GM12878 (cell line): ENCODE measurements at regions of chr19 and their contacts with region 1.

Region 1: GRCh38 chr19:12777217-12778016 is 2.1 kb upstream of the HOOK2 start:
- DNase-seq: no peak
- ATAC-seq: peak; percentile 68
- H3K4me3 ChIP-seq: peak overlapping the region; percentile 76
- H3K27ac ChIP-seq: peak overlapping the region; percentile 91
- H3K4me1 ChIP-seq: peaks cover 30% of the 10 kb centered on the region
- H3K27me3 ChIP-seq: no peaks in the 10 kb centered on the region
- CTCF ChIP-seq: peak; percentile 90 to 98 (median 95)
- EP300 ChIP-seq: no peak
- POLR2A ChIP-seq: no peak
- RAD21 ChIP-seq: peak; percentile 89

Region 2: DNA sequence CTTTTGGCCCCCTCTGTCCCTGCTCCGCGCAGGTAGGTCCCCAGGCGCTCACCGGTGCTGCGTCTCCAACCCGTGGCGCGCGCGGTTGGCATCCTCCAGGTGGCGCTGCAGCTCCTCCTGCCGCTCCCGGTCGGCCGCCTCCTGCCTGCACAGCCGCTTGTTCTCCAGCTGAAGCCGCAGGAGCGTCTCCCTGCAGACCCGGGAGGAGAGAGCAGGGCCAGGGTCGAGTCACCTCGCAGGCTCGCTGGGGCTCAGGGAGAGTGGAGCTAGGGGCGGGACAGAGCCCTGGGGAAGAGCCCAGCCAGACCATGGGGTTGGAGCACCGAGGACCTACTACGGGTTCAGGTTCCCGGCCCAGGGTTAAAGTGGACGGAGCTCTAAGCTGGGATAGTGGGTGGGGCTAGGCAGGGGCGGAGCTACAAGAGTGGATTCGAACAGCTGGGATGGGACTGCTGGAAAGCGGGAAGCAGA is 11.3 kb before region 1 on chr19:
- CTCF ChIA-PET with region 1: interaction called, 45 read pairs
- POLR2A ChIA-PET with region 1: interaction called, 4 read pairs
- RAD21 ChIA-PET with region 1: interaction called, 13 read pairs
- SMC1A ChIA-PET with region 1: interaction called, 17 read pairs
- in situ Hi-C with region 1: no loop called
- intact Hi-C with region 1: no loop called
- DNase-seq: no peak
- ATAC-seq: peak; percentile 94
- H3K4me3 ChIP-seq: peak overlapping the region; percentile 49; the same call in 1 of the 2 replicates
- H3K27ac ChIP-seq: no peak overlapping the region
- H3K4me1 ChIP-seq: no peaks in the 10 kb centered on the region; the same call in 1 of the 2 replicates
- H3K27me3 ChIP-seq: no peaks in the 10 kb centered on the region; a peak in 1 of 4 replicates
- CTCF ChIP-seq: peak; percentile 80 to 96 (median 86)
- EP300 ChIP-seq: no peak
- POLR2A ChIP-seq: no peak
- RAD21 ChIP-seq: peak; percentile 65

Region 3: GRCh38 chr19:12806239-12807081 is 29.0 kb after region 1 on chr19 and contains the start of gene RNASEH2A:
- CTCF ChIA-PET with region 1: interaction called, 18 read pairs
- POLR2A ChIA-PET with region 1: interaction called, 3 read pairs
- RAD21 ChIA-PET with region 1: interaction called, 303 read pairs
- SMC1A ChIA-PET with region 1: interaction called, 240 read pairs
- in situ Hi-C with region 1: no loop called
- intact Hi-C with region 1: no loop called
- DNase-seq: no peak
- ATAC-seq: peak; percentile 94
- H3K4me3 ChIP-seq: peak within 1 kb of the TSS; percentile 78
- H3K27ac ChIP-seq: peak within 1 kb of the TSS; percentile 74
- H3K4me1 ChIP-seq: peaks cover 13% of the 10 kb centered on the region
- H3K27me3 ChIP-seq: no peaks in the 10 kb centered on the region
- CTCF ChIP-seq: no peak
- EP300 ChIP-seq: no peak
- POLR2A ChIP-seq: peak; percentile 91
- RAD21 ChIP-seq: no peak
- polyA plus RNA-seq, gene RNASEH2A: 17.4 to 19.1 TPM